B cell (primary cell): ENCODE measurements at regions of chr1 and their contacts with region 1.

Region 1: DNA sequence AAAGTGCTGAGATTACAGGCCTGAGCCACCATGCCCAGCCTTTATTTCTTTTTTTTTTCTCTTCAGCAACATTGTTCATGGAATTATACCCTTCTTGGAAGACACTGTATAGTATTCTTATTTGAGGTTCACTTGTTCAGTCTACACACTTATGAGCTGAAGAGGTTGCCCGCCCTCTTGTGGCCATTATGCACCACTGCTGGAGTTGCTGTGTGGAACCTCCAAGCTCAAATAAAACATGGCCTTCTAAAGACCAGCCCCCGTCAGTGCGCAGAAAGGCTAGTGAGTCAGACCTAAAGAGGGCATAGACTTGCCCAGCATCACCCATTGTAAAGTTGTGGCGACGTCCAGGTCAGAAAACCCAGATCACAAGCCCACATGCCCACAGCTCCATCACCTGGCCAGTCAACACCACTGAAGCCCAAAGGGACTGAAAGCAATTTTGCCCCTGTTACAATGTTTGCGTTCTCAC is 20.4 kb downstream of the LURAP1 start:
- DNase-seq: peak; percentile 80
- ATAC-seq: peak; percentile 87
- H3K4me3 ChIP-seq: no peak overlapping the region
- H3K4me3 Mint-ChIP-seq: no peak overlapping the region
- H3K27ac ChIP-seq: no peak overlapping the region
- H3K27ac Mint-ChIP-seq: no peak overlapping the region
- H3K4me1 ChIP-seq: peaks cover 0 to 3% of the 10 kb centered on the region in 2 donors
- H3K4me1 Mint-ChIP-seq: peaks cover 1% of the 10 kb centered on the region
- H3K27me3 ChIP-seq: no peaks in the 10 kb centered on the region
- H3K27me3 Mint-ChIP-seq: no peaks in the 10 kb centered on the region
- CTCF ChIP-seq: peak; percentile 84

Region 2: DNA sequence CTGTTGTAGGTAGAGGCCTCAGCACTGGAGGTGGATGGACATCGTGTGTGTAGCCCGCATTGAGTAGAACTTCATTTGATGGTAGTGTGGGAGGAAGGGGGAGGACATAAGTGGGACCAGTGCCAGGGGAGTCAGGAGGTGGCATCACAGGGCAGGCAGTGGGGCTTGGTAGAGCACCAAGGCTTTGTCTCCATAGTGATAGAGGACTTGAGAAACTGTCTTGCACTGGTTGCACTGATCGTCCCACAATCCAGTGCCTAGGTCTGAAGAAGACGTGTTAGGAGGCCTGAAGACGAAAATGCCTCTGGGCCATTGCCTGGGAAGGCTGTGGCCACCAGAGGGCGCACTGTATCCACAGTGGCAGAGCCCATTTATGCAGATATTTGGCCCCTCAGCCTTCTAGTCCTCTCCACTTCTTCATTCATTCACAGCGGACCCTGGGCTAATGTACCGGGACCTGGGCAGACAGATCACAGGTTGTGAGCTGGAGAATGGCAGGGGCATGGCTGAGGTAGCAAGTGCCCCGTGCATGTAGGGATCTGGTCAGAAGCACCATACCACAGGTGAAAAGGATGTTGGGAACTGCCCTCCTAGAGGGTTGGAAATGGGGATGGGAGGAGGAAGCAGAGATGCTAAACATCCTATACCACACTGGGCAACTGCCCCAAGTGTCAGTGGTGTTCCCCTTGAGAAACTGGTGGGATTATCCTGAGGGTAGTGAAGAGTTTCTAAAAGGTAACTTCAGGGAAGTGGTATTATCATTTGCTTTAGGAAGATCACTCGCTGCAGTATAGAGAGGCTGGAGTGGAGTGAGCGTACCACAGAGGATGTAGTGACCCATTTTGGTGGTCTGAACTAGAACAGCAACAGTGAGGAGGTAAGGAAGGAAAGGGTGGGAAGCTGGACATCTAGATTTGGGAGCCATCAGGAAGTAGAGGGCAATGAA is 186.3 kb before region 1 on chr1:
- CTCF ChIA-PET with region 1: interaction called, 52 read pairs
- POLR2A ChIA-PET with region 1: no interaction called
- intact Hi-C with region 1: loop called (anchors 1 kb)
- DNase-seq: peak; percentile 88
- ATAC-seq: peak; percentile 89
- H3K4me3 ChIP-seq: no peak overlapping the region
- H3K4me3 Mint-ChIP-seq: no peak overlapping the region
- H3K27ac ChIP-seq: no peak overlapping the region
- H3K27ac Mint-ChIP-seq: no peak overlapping the region
- H3K4me1 ChIP-seq: peaks cover 16 to 20% of the 10 kb centered on the region in 2 donors
- H3K4me1 Mint-ChIP-seq: peaks cover 11% of the 10 kb centered on the region
- H3K27me3 ChIP-seq: no peaks in the 10 kb centered on the region
- H3K27me3 Mint-ChIP-seq: no peaks in the 10 kb centered on the region
- CTCF ChIP-seq: peak; percentile 98

Region 3: DNA sequence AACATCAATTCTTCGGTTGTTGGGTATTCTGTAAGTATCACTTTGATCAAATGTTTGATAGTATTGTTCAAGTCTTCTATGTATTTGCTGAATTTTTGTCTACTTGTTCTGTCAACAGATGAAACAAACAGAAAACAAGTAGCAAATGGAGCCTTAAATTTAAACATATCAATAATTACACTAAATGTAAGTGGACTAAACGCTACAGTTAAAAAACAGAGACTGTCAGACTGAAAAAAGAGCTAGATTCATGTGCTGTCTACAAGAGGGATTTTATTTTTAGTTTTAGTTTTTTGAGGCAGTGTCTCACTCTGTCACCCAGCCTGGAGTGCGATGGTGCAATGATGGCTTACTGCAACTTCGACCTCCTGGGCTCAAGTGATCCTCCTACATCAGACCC is 13.4 kb after region 1 on chr1:
- CTCF ChIA-PET with region 1: interaction called, 15 read pairs
- POLR2A ChIA-PET with region 1: no interaction called
- intact Hi-C with region 1: no loop called
- DNase-seq: no peak
- ATAC-seq: no peak
- H3K4me3 ChIP-seq: no peak overlapping the region
- H3K4me3 Mint-ChIP-seq: no peak overlapping the region
- H3K27ac ChIP-seq: no peak overlapping the region
- H3K27ac Mint-ChIP-seq: no peak overlapping the region
- H3K4me1 ChIP-seq: no peaks in the 10 kb centered on the region
- H3K4me1 Mint-ChIP-seq: no peaks in the 10 kb centered on the region
- H3K27me3 ChIP-seq: no peaks in the 10 kb centered on the region
- H3K27me3 Mint-ChIP-seq: no peaks in the 10 kb centered on the region
- CTCF ChIP-seq: no peak